A673 (cell line): ENCODE measurements at regions of chr6 and their contacts with region 1.

Region 1: GRCh38 chr6:31568537-31568961 is 3.5 kb upstream of the LTA start:
- DNase-seq: no peak
- H3K4me3 ChIP-seq: no peak overlapping the region
- H3K27ac ChIP-seq: no peak overlapping the region
- H3K4me1 ChIP-seq: no peaks in the 10 kb centered on the region
- H3K27me3 ChIP-seq: no peaks in the 10 kb centered on the region
- CTCF ChIP-seq: no peak

Region 2: GRCh38 chr6:30914076-30914853 is 654.3 kb before region 1 on chr6 and contains the start of gene VARS2:
- CTCF ChIA-PET with region 1: no interaction called
- POLR2A ChIA-PET with region 1: no interaction called
- intact Hi-C with region 1: no loop called
- DNase-seq: peak; percentile 89
- H3K4me3 ChIP-seq: peak within 1 kb of the TSS; percentile 62
- H3K27ac ChIP-seq: peak within 1 kb of the TSS; percentile 75
- H3K4me1 ChIP-seq: peaks cover 13% of the 10 kb centered on the region
- H3K27me3 ChIP-seq: no peaks in the 10 kb centered on the region
- CTCF ChIP-seq: peak; percentile 40
- total RNA-seq, gene VARS2: 48.4 and 53.4 TPM in 2 replicates

Region 3: GRCh38 chr6:31531162-31531561 is 37.4 kb before region 1 on chr6:
- CTCF ChIA-PET with region 1: no interaction called
- POLR2A ChIA-PET with region 1: interaction called, 14 read pairs
- intact Hi-C with region 1: no loop called
- DNase-seq: no peak
- H3K4me3 ChIP-seq: no peak overlapping the region
- H3K27ac ChIP-seq: no peak overlapping the region
- H3K4me1 ChIP-seq: no peaks in the 10 kb centered on the region
- H3K27me3 ChIP-seq: no peaks in the 10 kb centered on the region
- CTCF ChIP-seq: no peak